Right ventricle myocardium inferior (tissue), 1 donor: ENCODE measurements at regions of chr1 and their contacts with region 1.

Region 1: GRCh38 chr1:24415334-24415909 is at the start of gene NIPAL3:
- DNase-seq: peak; percentile 97
- ATAC-seq: peak; percentile 94
- total RNA-seq, gene NIPAL3: 30.9 TPM

Region 2: DNA sequence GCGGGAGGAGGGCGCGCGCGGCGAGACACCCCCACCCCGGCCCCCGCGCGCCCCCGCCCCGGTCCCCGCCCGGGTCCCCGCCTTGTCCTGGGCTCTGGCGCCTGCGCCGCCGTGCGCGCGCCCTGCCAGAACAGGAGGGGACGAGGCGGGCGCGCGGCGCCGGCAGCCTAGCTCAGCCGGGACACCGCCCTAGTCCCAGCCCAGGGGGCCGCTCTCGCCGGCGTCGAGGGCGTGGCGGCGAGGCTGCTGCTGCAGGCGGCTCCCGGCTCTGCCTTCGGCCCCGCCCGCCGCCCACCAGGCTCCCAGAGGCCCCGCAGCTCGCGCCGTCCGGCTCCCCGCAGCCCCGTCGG is 87.3 kb after region 1 on chr1 and contains the start of gene RCAN3:
- intact Hi-C with region 1: loop called (anchors 5 kb)
- DNase-seq: peak; percentile 93
- ATAC-seq: peak; percentile 98
- total RNA-seq, gene RCAN3: 5.9 TPM

Region 3: GRCh38 chr1:24526940-24527542 is 111.6 kb after region 1 on chr1:
- intact Hi-C with region 1: loop called (anchors 2 kb)
- DNase-seq: no peak
- ATAC-seq: no peak

Region 4: DNA sequence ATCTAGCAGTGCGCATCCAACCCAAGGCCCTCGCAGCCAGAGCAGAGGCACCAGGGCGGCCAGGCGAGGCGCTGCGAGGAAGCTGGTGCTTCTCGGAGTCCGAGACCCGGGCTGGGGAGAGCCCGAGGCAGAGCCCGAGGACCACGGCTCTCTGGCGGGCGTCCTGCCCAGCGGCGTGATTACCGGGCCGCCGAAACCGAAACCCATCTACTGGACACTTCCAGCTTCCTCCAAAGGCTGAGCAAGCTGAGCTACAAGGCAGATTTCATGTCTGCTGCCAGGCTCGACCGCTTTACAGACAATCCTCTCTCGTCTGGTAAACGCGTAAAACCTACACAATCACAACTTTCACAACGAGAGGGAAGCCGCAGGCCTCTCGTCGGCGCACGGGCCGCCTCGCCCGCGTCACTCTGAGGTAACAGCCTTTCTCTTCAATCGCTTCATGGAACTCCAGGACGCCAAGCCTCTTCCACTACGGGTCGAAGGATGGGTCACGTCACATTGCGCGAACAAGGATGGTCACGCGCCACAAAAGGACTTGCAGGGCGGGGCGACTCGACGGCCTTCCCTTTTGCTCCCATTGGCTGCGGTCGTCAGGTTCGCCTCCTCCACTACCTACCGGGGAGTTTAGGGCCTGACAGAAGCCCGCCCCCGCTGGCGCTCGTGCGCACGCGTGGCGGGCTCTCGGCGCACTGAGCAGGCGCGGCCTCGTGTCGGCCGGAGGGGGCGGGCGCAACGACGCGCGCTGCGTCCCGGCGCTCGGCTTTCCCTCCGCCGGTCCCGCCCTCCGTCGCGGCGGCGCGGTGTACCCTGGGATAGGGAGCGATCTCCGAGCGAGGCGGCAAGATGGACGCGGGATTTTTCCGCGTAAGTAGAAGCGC is 227.3 kb after region 1 on chr1 and contains the start of gene SRRM1:
- intact Hi-C with region 1: loop called (anchors 5 kb)
- DNase-seq: peak; percentile 99
- ATAC-seq: peak; percentile 98
- total RNA-seq, gene SRRM1: 58.8 TPM

Region 5: GRCh38 chr1:24673336-24673735 is 257.9 kb after region 1 on chr1:
- intact Hi-C with region 1: no loop called
- DNase-seq: no peak
- ATAC-seq: no peak